ENCODE measurements at regions of chr12 and their contacts with region 1.

Region 1: DNA sequence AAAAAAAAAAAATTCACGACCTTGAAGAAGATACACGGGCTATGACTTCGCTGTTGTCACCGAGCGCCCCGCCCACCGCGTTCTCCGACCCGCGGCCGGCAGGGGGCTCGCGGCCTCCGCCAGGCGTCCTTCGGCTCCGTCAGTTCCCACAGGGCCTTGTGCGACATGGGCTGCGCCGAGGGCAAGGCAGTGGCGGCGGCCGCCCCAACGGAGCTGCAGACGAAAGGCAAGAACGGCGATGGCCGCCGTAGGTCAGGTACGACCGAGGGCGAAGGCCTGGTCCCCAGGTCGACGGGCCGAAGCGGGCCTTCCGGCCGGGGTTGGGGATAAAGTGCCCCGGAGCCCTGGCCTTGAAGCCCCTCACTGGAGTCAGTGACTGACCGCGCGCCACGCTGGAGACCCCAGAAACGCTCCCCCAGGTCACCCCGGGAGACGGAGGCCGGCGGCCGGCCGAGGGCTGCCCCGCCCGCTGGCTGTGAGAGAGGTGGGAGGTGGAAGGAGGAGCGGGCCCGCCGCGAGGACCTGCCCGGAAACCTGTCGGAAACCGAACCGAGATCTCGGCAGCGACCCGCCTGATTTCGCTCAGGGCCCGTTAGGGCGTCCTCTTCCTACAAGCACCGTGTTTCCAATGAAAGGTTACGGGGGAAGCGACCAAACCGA is at the start of gene TXNRD1:
- DNase-seq: peak; percentile 58
- H3K4me3 ChIP-seq: peak within 1 kb of the TSS; percentile 48 to 63 (median 55)
- H3K27ac ChIP-seq: peak within 1 kb of the TSS; percentile 43
- H3K4me1 ChIP-seq: peaks cover 30% of the 10 kb centered on the region
- H3K27me3 ChIP-seq: no peaks in the 10 kb centered on the region
- CTCF ChIP-seq: peak; percentile 53 to 94
- total RNA-seq, gene TXNRD1: 148 to 150 TPM

Region 2: DNA sequence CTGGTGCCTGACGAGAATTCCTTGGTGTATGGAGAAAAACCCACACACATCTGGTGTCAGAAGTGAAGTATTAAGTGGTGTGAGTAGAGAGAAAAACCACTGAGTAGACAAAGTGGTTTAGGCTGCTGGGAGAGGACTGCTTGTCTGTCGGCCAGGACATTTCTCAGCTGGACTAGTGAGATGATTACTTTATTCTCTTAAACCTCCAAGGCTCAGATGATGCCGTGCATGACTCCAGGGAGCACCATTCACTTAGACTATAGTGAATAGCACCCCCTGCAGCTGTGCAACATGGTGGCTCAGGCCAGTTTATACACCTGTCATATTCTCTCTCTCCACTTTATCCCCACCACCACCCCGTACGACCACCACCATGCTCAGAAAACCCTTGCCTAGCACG is 49.3 kb before region 1 on chr12:
- CTCF ChIA-PET with region 1: no interaction called
- dilution Hi-C with region 1: loop called (anchors 5 kb)
- in situ Hi-C with region 1: no loop called
- intact Hi-C with region 1: no loop called
- DNase-seq: no peak
- H3K4me3 ChIP-seq: no peak overlapping the region
- H3K27ac ChIP-seq: no peak overlapping the region
- H3K4me1 ChIP-seq: no peaks in the 10 kb centered on the region
- H3K27me3 ChIP-seq: no peaks in the 10 kb centered on the region
- CTCF ChIP-seq: no peak

Region 3: GRCh38 chr12:104280703-104281458 is 65.1 kb after region 1 on chr12:
- CTCF ChIA-PET with region 1: no interaction called
- dilution Hi-C with region 1: loop called (anchors 5 kb)
- in situ Hi-C with region 1: loop called (anchors 5 kb)
- intact Hi-C with region 1: loop called (anchors 1 kb)
- DNase-seq: peak; percentile 84
- H3K4me3 ChIP-seq: no peak overlapping the region
- H3K27ac ChIP-seq: peak overlapping the region; percentile 55
- H3K4me1 ChIP-seq: peaks cover 43% of the 10 kb centered on the region
- H3K27me3 ChIP-seq: no peaks in the 10 kb centered on the region
- CTCF ChIP-seq: no peak

Region 4: DNA sequence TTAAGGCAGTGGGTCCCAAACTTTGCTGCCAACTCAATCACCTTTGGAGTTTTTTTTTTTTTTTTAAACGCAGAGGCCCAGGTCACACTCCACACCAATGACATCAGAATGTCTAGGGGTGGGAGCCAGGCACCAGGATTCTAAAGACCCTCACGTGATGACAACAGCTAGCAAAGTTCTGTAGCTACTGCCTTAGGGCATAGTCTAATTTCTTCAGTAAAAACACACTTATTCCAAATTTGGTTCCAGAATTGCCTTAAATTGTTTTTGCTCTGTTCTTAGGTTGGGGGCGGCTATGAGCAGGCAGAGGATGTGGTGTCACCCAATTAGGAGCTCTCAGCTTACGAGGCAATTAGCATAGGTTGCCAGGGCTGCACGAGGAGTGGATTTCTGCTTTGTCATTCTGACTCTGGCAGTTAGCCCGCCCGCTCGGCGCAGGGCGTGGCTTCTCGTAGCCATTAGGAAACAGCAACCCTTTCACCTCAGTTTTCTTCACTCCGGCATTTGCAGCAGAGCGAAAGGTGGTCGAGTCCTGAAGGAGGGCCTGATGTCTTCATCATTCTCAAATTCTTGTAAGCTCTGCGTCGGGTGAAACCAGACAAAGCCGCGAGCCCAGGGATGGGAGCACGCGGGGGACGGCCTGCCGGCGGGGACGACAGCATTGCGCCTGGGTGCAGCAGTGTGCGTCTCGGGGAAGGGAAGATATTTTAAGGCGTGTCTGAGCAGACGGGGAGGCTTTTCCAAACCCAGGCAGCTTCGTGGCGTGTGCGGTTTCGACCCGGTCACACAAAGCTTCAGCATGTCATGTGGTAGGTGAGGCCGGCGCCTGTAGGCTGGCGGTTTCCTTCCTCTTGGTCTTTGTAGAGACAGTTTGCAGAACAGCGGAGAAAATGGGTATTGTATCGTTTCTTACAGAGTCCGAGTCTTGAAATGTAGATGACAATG is 71.0 kb after region 1 on chr12:
- CTCF ChIA-PET with region 1: interaction called, 3 read pairs
- dilution Hi-C with region 1: loop called (anchors 5 kb)
- in situ Hi-C with region 1: loop called (anchors 5 kb)
- intact Hi-C with region 1: loop called (anchors 1 kb)
- DNase-seq: peak; percentile 97
- H3K4me3 ChIP-seq: peak overlapping the region; percentile 60 to 100 (median 84)
- H3K27ac ChIP-seq: peak overlapping the region; percentile 99
- H3K4me1 ChIP-seq: peaks cover 37% of the 10 kb centered on the region
- H3K27me3 ChIP-seq: no peaks in the 10 kb centered on the region
- CTCF ChIP-seq: no peak

Region 5: GRCh38 chr12:104294845-104295688 is 79.3 kb after region 1 on chr12:
- CTCF ChIA-PET with region 1: no interaction called
- dilution Hi-C with region 1: no loop called
- in situ Hi-C with region 1: no loop called
- intact Hi-C with region 1: loop called (anchors 1 kb)
- DNase-seq: no peak
- H3K4me3 ChIP-seq: no peak overlapping the region
- H3K27ac ChIP-seq: no peak overlapping the region
- H3K4me1 ChIP-seq: peaks cover 2% of the 10 kb centered on the region
- H3K27me3 ChIP-seq: no peaks in the 10 kb centered on the region
- CTCF ChIP-seq: no peak

Region 6: DNA sequence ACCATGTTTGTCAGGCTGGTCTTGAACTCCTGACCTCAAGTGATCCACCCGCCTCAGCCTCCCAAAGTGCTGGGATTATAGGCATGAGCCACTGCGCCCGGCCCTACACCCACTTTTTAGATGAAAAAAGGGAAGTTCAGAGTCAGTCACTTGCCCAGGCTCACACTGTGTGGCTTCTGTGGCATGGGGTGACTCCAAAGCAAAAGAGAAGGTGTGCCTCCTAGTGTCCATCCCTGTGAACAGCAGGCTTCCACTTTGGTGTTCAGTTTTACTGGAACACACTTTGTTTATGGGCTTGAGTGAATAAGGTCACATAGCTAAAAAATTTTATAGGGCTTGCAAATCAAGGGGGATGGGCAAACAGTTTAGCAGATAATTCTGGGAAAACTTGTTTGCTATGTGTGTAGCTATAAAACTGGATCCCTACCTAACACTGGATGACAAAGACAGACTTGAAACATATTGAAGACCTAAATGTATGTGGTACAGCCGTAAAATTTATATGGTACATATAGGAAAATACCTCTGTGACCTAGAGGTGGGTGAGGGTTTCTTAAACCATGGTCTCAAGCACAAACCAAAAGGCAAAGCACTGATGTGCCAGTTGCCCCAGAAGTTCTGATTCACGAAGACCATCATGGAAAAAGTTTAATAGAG is 142.7 kb after region 1 on chr12:
- CTCF ChIA-PET with region 1: no interaction called
- dilution Hi-C with region 1: no loop called
- in situ Hi-C with region 1: no loop called
- intact Hi-C with region 1: loop called (anchors 1 kb)
- DNase-seq: peak; percentile 40
- H3K4me3 ChIP-seq: no peak overlapping the region
- H3K27ac ChIP-seq: no peak overlapping the region
- H3K4me1 ChIP-seq: no peaks in the 10 kb centered on the region
- H3K27me3 ChIP-seq: no peaks in the 10 kb centered on the region
- CTCF ChIP-seq: peak; percentile 86 to 88

Measured in mammary epithelial cell (primary cell).